Dendritic cell treated with granulocyte-macrophage colony-stimulating factor and Interleukin-4, amounts not matched to agents 40 ng/mL and 50 ng/mL, for 4 days (primary cell): ENCODE measurements at regions of chr11 and their contacts with region 1.

Region 1: GRCh38 chr11:65569973-65570918 is at the start of gene ZNRD2:
- H3K4me3 Mint-ChIP-seq: peak within 1 kb of the TSS; percentile 96
- H3K27ac Mint-ChIP-seq: peak within 1 kb of the TSS; percentile 94
- H3K4me1 Mint-ChIP-seq: peaks cover 75% of the 10 kb centered on the region
- H3K27me3 Mint-ChIP-seq: no peaks in the 10 kb centered on the region

Region 2: GRCh38 chr11:65540297-65541092 is 29.8 kb before region 1 on chr11:
- intact Hi-C with region 1: loop called (anchors 1 kb)
- H3K4me3 Mint-ChIP-seq: peak overlapping the region; percentile 75
- H3K27ac Mint-ChIP-seq: peak overlapping the region; percentile 89
- H3K4me1 Mint-ChIP-seq: peaks cover 62% of the 10 kb centered on the region
- H3K27me3 Mint-ChIP-seq: peaks cover 6% of the 10 kb centered on the region

Region 3: GRCh38 chr11:65546217-65546958 is 23.9 kb before region 1 on chr11:
- intact Hi-C with region 1: loop called (anchors 2 kb)
- H3K4me3 Mint-ChIP-seq: peak overlapping the region; percentile 65
- H3K27ac Mint-ChIP-seq: peak overlapping the region; percentile 38
- H3K4me1 Mint-ChIP-seq: peaks cover 73% of the 10 kb centered on the region
- H3K27me3 Mint-ChIP-seq: peaks cover 23% of the 10 kb centered on the region

Region 4: DNA sequence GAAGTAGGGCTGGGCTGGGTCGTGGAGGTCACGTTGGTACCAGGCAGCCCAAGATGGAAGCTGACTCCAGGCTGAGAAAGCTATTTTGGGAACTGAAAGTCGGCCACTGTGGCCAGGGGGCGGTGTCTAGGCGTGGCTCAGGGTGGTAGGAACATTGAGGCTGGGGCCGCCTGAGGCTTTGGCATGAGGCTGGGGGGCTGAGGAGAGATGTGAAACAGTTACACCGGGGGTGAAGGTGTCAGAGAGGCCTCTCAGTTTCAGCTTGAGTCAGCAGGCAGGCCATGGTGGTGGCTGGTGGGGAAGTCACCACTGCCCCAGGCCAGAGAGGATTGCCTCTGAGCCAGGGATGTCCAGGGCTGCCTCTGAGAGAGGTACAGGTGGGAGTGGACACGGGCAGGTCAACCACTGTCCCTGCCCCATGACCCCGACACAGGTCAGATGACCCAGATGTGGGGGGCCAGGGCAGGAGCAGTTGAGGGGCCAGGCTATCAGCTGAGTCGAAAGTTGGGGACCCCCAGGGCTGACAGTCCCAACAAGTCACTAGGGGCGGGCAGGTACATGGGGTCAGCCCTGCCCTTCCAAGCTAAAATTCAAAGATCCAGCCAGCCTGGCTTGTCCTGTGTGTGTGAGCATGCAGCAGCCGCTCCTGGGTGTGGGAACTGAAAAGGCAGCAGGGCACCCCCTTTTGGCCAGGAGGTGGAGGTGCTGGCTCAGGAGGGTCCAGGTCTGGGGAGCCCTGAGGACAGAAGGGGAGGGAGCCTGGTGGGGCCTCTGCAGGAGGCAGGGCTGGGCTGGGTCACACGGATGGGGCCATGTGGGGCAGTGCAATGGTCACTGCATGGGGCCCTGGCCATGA is 18.2 kb after region 1 on chr11:
- intact Hi-C with region 1: loop called (anchors 1 kb)
- H3K4me3 Mint-ChIP-seq: peak overlapping the region; percentile 79
- H3K27ac Mint-ChIP-seq: peak overlapping the region; percentile 95
- H3K4me1 Mint-ChIP-seq: peaks cover 80% of the 10 kb centered on the region
- H3K27me3 Mint-ChIP-seq: no peaks in the 10 kb centered on the region

Region 5: GRCh38 chr11:65615229-65615941 is 45.1 kb after region 1 on chr11 and contains the start of gene PCNX3:
- intact Hi-C with region 1: loop called (anchors 1 kb)
- H3K4me3 Mint-ChIP-seq: peak within 1 kb of the TSS; percentile 91
- H3K27ac Mint-ChIP-seq: peak within 1 kb of the TSS; percentile 95
- H3K4me1 Mint-ChIP-seq: peaks cover 54% of the 10 kb centered on the region
- H3K27me3 Mint-ChIP-seq: no peaks in the 10 kb centered on the region